ENCODE measurements at regions of chr6 and their contacts with region 1.

Region 1: DNA sequence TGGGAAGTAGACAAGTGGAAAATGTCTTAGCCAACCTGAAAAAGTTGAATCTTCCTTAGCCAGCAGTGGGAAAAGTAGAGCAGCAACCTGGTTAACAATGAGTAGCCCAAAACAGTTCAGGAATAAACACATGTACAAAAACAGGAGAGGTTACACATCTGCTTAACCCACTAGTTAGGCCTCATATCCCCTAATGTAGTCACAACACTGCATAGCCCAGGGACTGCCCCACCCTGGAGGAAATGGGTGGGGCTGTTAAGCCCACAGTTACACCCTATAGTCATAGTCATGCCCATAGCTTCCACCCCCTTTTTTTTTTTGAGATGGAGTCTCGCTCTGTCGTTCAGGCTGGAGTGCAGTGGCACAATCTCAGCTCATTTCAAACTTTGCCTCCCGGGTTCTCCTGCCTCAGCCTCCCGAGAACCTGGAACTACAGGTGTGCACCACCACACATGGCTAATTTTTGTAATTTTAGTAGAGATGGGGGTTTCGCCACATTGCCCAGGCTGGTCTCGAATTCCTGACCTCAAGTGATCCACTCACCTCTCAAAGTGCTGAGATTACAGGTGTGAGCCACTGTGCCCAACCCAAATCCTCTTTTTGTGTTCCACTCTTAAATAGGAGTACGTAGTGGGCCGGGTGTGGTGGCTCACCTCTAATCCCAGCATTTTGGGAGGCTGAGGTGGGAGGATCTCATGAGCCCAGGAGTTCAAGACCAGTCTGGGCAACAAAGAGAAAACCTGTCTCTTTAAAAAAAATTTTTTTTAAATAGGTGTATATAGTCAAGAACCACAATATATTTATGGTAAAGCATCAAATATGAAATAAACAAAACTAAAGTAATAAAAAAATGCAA is 24.5 kb downstream of the ILRUN start:
- DNase-seq: no peak
- ATAC-seq: no peak
- H3K4me3 ChIP-seq: no peak overlapping the region; a peak in 1 of 6 replicates
- H3K27ac ChIP-seq: peak overlapping the region; percentile 73
- H3K4me1 ChIP-seq: peaks cover 95% of the 10 kb centered on the region
- H3K27me3 ChIP-seq: no peaks in the 10 kb centered on the region
- CTCF ChIP-seq: no peak
- EP300 ChIP-seq: no peak
- POLR2A ChIP-seq: no peak
- RAD21 ChIP-seq: no peak

Region 2: DNA sequence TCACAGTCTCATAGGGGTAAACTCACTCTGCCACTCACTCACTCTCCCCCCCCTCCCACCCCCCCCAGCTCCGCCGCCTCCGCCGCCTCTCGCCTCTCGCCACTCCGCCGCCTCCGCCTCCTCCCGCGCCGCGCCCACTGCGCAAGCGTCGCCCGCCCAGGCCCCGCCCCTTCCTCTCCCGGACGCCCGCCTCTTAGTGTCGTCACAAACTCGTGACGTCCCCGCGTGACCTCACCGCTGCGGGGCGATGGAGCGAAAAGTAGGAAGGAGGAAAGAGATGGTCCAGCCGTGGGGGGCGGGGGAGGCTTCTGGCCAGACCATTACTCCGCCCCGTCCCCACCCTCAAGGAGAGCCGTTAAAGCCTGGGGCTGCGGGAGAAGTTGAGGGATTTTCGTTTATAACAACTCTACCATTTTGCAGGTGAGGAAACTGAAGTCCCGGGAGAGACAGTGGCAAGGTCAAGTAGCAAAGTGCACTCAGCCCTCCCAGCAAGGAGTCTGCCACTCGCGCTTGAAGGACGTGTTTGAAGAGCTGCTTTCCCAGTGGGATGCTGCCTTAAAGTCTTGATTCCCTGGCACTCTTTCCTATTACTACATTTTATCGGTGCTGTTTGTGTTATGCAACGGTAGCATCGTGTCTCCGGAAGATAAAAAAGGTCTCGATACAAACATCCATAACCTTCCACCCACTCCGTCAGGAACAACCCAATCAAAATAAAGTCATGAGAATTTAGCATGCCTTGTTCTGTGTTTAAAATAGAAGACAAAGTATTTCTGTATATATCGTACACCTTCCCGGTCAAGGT is 24.9 kb after region 1 on chr6 and contains the start of gene ILRUN:
- CTCF ChIA-PET with region 1: no interaction called
- POLR2A ChIA-PET with region 1: interaction called, 11 read pairs
- in situ Hi-C with region 1: no loop called
- intact Hi-C with region 1: loop called (anchors 2 kb)
- DNase-seq: peak; percentile 86
- ATAC-seq: peak; percentile 84
- H3K4me3 ChIP-seq: peak within 1 kb of the TSS; percentile 91 to 99 (median 98)
- H3K27ac ChIP-seq: peak within 1 kb of the TSS; percentile 82
- H3K4me1 ChIP-seq: peaks cover 52% of the 10 kb centered on the region
- H3K27me3 ChIP-seq: no peaks in the 10 kb centered on the region; a peak in 1 of 5 replicates
- CTCF ChIP-seq: 0 out of 2 replicates have a peak, but pooled peaks have one; percentile 11
- EP300 ChIP-seq: 0 out of 4 replicates have a peak, but pooled peaks of 1 of the 2 experiments have one; percentile 29
- POLR2A ChIP-seq: peak in 1 of 2 experiments; percentile 80; a peak in 2 of 4 replicates
- RAD21 ChIP-seq: no peak
- total RNA-seq, gene ILRUN: 66.6 and 90.8 TPM in 2 replicates